ENCODE measurements at regions of chr6 and their contacts with region 1.

Region 1: DNA sequence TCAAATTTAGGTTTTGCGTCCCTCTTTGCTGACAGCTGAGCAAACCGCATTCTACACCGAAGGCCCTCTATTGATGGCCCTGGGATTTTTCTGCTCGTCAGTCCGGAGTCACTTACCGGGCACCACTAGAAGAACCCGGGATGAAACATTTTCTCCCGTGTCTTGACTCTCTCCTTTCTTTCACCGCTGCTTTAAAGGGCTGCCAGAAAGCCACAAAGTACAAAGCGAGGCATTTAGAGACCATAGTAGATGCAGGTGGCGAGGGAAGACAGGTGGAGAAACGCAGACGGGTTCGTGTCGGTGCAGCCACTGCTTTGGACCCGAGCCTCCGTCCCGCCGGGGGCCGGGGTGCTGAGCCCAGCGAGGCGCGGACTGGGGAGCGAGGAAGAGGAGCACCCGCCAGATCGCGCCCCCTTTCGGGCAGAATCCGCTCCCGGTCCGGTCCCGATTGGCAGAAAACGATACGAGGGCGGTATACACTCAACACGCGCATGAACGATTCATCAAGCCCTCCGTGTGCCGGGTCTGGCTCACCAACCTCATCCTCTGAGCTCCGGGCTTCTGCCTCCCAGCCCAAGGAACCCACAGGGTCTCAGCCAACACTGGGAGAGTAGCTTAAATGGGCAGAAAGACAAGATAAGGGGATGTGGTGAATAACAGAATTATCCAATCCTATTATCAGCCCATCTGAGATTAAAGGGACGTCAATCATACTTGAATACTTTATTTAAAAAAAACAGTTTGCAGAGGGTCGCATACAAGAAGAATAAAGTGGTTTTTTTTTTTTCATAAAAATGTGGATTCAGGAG is 84.9 kb downstream of the TRIM27 start:
- DNase-seq: peak; percentile 68
- ATAC-seq: peak; percentile 79
- H3K4me3 Mint-ChIP-seq: peak overlapping the region; percentile 92
- H3K27ac Mint-ChIP-seq: peak overlapping the region; percentile 89
- H3K4me1 Mint-ChIP-seq: peaks cover 24% of the 10 kb centered on the region
- H3K27me3 Mint-ChIP-seq: peaks cover 25% of the 10 kb centered on the region
- CTCF ChIP-seq: no peak

Region 2: DNA sequence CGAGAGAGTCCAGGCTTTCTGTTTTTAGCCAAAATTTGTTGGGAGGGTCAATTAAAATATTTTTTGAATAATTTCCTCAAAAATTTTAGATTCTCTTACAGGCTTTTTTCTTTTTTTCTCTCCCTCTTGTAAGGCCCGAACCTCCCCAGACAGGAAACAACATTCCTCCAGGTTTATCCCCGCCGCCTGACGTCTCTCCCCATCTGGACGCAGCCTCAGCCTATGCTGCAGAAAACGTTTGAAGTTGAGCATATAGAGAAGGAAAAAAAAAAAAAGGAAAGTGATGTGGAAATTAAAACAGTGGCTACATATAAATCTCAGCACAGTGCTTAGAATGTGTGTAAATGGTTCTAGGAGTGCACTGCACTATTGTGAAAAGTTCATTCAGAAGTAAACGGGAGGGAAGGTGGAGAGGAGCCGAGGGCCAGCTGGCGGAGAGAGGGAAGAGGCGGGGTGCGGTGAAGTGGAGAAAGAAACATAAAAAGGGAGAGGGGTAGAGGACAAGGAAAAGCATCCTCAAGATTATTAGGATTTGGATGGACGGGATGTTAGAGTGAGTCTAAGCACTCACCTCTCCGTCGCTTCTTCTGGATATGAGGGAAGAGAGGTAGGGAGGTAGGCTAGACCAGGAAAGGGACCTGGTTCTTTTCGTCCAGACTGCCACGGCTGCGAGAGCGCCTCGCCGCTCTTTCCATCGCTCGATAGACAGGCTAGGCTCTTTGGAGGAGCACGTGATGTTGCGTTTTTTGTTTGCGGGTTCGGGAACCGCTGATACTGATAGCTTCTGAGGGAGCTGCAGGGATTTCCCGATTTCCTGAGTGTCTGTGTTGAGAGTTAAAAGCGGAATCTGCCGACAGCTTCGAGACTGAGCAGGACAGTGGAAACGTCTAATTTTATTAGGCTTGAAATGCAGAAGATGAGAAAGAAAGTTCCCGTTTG is 13.8 kb before region 1 on chr6:
- CTCF ChIA-PET with region 1: interaction called, 10 read pairs
- POLR2A ChIA-PET with region 1: no interaction called
- intact Hi-C with region 1: no loop called
- DNase-seq: no peak
- ATAC-seq: no peak
- H3K4me3 Mint-ChIP-seq: no peak overlapping the region
- H3K27ac Mint-ChIP-seq: no peak overlapping the region
- H3K4me1 Mint-ChIP-seq: peaks cover 9% of the 10 kb centered on the region
- H3K27me3 Mint-ChIP-seq: peaks cover 66% of the 10 kb centered on the region
- CTCF ChIP-seq: no peak

Region 3: DNA sequence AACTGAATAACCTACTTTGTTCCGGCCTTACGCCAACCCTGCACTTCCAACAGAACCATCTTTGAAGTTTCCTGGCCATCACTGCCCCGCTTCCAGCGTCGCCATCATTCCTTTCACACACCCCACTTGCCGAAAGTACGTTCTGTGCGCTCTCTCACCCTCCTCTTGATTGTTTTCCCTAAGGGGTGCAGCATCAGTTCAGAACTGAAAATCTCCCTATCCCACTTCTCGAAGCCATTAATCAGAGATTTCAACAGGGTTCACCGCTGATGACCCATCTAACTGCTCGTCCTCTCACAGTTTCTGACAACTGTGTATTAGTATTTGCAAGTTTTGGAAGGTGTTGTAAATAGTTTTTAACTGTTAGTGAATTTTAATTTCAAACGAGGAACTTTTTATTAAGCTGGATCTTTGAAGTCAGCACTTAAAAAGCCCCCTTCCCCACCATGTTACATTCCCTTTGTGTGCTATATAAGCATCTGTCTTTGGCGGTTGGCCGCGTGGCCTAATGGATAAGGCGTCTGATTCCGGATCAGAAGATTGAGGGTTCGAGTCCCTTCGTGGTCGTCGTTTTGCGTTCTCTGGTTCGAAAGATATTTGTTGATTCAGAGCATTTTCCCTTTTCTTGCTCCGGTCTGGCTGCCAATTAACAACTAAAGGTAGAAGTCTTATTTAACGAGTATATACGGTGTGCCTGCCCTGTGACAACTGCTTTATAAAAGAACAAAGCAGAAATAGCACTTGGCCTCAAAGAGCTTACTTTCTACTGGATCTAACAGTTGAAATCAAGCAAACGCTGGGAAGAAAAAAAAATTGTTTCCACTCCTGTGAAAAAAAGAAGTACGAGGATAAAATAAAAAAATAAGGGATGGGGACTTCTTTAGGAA is 42.3 kb after region 1 on chr6:
- CTCF ChIA-PET with region 1: interaction called, 3 read pairs
- POLR2A ChIA-PET with region 1: no interaction called
- intact Hi-C with region 1: loop called (anchors 1 kb)
- DNase-seq: peak; percentile 48
- ATAC-seq: peak; percentile 39
- H3K4me3 Mint-ChIP-seq: peak overlapping the region; percentile 75
- H3K27ac Mint-ChIP-seq: peak overlapping the region; percentile 83
- H3K4me1 Mint-ChIP-seq: peaks cover 21% of the 10 kb centered on the region
- H3K27me3 Mint-ChIP-seq: peaks cover 51% of the 10 kb centered on the region
- CTCF ChIP-seq: no peak

Region 4: DNA sequence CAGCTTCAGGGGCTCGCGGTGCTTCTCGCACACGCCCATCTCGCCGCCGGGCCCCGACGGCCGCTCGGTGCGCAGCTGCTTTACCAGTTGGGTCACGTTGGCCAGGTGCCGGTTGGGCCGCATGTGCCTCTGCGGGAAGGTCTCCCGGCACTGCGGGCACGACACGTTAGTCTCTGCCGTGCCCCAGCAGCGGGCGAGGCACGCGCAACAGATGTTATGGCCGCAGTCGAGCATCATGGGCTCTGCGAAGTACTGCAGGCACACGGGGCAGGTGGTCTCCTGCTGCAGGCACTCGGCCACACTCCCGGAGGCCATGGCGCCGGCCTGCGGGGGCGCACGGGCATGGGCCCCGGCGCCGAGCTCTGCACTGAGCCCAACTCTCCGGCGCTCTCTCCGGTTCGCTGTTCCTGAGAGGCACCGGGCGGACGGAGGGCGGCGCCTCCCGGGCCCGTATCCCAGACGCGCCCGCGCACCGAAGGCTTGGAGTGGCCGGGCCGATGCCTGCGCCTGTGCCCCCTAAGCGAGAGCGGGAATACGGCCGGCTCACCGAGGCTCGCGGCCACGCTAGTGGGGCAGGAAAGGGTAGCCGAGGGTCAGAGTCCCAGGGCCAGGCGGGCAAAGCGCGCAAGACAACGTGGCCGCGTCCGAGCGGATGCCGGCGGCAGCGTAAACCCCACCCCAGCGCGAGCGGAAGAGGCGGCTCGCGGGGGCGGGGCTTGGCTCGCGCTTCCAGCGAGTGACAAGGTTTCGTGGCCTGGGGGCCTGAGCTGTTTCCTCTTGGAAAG is 84.7 kb after region 1 on chr6 and contains the start of gene TRIM27:
- CTCF ChIA-PET with region 1: interaction called, 6 read pairs
- POLR2A ChIA-PET with region 1: interaction called, 9 read pairs
- intact Hi-C with region 1: loop called (anchors 1 kb)
- DNase-seq: peak; percentile 85
- ATAC-seq: peak; percentile 87
- H3K4me3 Mint-ChIP-seq: peak within 1 kb of the TSS; percentile 92
- H3K27ac Mint-ChIP-seq: peak within 1 kb of the TSS; percentile 92
- H3K4me1 Mint-ChIP-seq: peaks cover 42% of the 10 kb centered on the region
- H3K27me3 Mint-ChIP-seq: no peaks in the 10 kb centered on the region
- CTCF ChIP-seq: no peak
- total RNA-seq, gene TRIM27: 59.5 and 64.8 TPM in 2 replicates

Region 5: GRCh38 chr6:28981833-28982475 is 143.1 kb after region 1 on chr6:
- CTCF ChIA-PET with region 1: interaction called, 14 read pairs
- POLR2A ChIA-PET with region 1: interaction called, 11 read pairs
- intact Hi-C with region 1: loop called (anchors 1 kb)
- DNase-seq: peak; percentile 65
- ATAC-seq: peak; percentile 61
- H3K4me3 Mint-ChIP-seq: peak overlapping the region; percentile 89
- H3K27ac Mint-ChIP-seq: peak overlapping the region; percentile 97
- H3K4me1 Mint-ChIP-seq: peaks cover 50% of the 10 kb centered on the region
- H3K27me3 Mint-ChIP-seq: peaks cover 32% of the 10 kb centered on the region
- CTCF ChIP-seq: no peak

Region 6: DNA sequence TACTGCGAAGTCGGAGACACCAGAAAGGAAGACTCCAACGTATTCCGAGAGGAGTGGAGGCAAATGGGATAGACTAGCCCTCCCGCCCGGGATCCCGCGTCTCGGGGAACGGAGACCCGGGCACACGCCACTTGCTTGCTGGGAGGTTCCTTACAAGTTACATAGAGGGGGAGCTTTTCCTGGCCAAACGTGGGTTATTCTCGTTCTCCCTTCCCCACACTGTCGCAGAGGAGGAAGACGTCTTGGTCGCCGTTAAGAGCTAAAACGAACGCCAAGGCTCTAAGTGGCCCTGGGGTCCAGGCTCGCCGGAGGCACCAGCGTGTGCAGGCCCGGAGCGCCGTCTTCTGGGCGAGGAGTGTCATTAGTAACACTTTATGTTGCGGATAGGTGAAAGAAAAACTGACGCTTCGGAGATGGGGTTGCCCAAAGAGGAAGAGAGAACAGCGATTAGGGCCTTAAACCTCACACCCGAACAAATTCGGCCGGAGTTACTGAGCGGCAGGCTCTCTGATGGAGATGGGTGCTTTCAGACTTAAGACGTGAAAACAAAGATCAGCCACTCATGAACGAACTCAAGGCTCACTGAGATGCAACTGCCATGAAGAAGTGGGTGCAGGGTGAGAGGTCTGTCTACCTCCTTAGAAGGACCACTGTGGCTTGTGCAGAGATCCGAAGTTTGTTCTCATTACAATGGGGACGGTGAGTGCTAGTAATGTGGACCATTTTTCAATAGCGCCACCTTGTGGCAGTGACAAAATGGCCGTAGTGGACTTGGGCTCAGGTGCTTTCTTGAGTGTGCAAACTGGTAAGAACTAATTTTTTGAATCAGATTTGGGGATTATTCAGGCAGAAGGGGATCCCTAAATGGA is 178.0 kb after region 1 on chr6:
- CTCF ChIA-PET with region 1: interaction called, 78 read pairs
- POLR2A ChIA-PET with region 1: interaction called, 3 read pairs
- intact Hi-C with region 1: loop called (anchors 1 kb)
- DNase-seq: peak; percentile 63
- ATAC-seq: peak; percentile 85
- H3K4me3 Mint-ChIP-seq: peak overlapping the region; percentile 80
- H3K27ac Mint-ChIP-seq: peak overlapping the region; percentile 41
- H3K4me1 Mint-ChIP-seq: peaks cover 17% of the 10 kb centered on the region
- H3K27me3 Mint-ChIP-seq: peaks cover 31% of the 10 kb centered on the region
- CTCF ChIP-seq: peak; percentile 92

Measured in activated B cell treated with CpG ODN at 0.5 μM for 24 hours (primary cell).